Heart left ventricle (tissue), 16 donors: ENCODE measurements at regions of chr13 and their contacts with region 1.

Region 1: GRCh38 chr13:76822698-76823267 is 63.4 kb downstream of the KCTD12 start:
- DNase-seq: no peak
- ATAC-seq: peak in 3 of 4 donors; percentile 68 to 75 (median 72)
- H3K4me3 ChIP-seq: no peak overlapping the region
- H3K27ac ChIP-seq: peak overlapping the region in 3 of 12 donors; percentile 31 to 43 (median 42)
- H3K4me1 ChIP-seq: peaks cover 0 to 30% (median 2%) of the 10 kb centered on the region in 12 donors
- H3K27me3 ChIP-seq: no peaks in the 10 kb centered on the region
- CTCF ChIP-seq: peak in 11 of 12 donors; percentile 9 to 52 (median 38)
- POLR2A ChIP-seq: no peak

Region 2: GRCh38 chr13:76667551-76667950 is 155.2 kb before region 1 on chr13:
- intact Hi-C with region 1: loop called in 4 of 10 experiments (anchors 2 to 10 kb)
- DNase-seq: peak in 2 of 5 donors; percentile 24 to 26
- ATAC-seq: peak in 3 of 4 donors; percentile 57 to 71 (median 63)
- H3K4me3 ChIP-seq: no peak overlapping the region
- H3K27ac ChIP-seq: no peak overlapping the region
- H3K4me1 ChIP-seq: peaks cover 0 to 31% (median 0%) of the 10 kb centered on the region in 12 donors
- H3K27me3 ChIP-seq: no peaks in the 10 kb centered on the region
- CTCF ChIP-seq: peak in 11 of 12 donors; percentile 8 to 60 (median 38)
- POLR2A ChIP-seq: no peak